ENCODE measurements at regions of chr1 and their contacts with region 1.

Region 1: GRCh38 chr1:40338745-40339424 is 21.8 kb upstream of the COL9A2 start:
- DNase-seq: peak; percentile 84
- CTCF ChIP-seq: peak; percentile 97

Region 2: GRCh38 chr1:40094466-40095110 is 244.3 kb before region 1 on chr1:
- CTCF ChIA-PET with region 1: interaction called, 262 read pairs
- POLR2A ChIA-PET with region 1: no interaction called
- DNase-seq: no peak
- CTCF ChIP-seq: no peak

Region 3: GRCh38 chr1:40153073-40153770 is 185.7 kb before region 1 on chr1:
- CTCF ChIA-PET with region 1: interaction called, 182 read pairs
- POLR2A ChIA-PET with region 1: no interaction called
- DNase-seq: peak; percentile 35
- CTCF ChIP-seq: peak; percentile 74

Region 4: DNA sequence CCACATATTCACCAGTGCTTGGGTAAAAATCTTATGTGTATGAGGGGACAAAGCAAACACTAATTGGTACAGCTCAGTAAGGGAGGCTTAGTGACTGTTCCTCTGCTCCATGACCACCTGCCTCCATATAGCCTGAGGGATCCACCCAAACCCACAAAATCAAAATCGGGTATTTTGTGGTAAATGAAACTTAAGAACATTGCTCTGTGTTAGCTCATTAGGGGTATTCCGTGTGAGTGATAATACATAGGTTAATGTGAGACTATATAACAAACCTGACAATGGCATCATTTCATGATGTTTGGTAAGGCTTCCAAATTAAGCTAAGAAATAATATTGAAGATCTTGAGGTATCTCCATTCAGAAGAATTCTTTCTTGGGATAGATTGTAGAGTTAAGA is 47.6 kb before region 1 on chr1:
- CTCF ChIA-PET with region 1: interaction called, 15 read pairs
- POLR2A ChIA-PET with region 1: no interaction called
- DNase-seq: no peak
- CTCF ChIP-seq: no peak

Region 5: DNA sequence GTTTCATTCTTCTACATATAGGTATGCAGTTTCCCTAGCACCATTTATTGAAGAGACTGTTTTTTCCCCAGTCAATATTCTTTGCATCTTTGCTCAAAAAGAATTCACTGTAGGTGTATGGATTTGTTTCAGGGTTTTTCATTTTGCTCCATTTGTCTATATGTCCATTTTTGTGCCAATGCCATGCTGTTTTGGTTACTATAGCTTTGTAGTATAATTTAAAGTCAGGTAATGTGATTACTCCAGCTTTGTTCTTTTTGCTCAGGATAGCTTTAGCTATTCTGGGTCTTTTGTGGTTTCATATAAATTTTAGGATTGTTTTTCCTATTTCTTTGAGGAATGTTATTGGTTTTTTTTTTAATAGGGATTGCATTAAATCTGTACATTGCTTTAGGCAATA is 18.7 kb after region 1 on chr1:
- CTCF ChIA-PET with region 1: interaction called, 31 read pairs
- POLR2A ChIA-PET with region 1: no interaction called
- DNase-seq: no peak
- CTCF ChIP-seq: no peak

Region 6: DNA sequence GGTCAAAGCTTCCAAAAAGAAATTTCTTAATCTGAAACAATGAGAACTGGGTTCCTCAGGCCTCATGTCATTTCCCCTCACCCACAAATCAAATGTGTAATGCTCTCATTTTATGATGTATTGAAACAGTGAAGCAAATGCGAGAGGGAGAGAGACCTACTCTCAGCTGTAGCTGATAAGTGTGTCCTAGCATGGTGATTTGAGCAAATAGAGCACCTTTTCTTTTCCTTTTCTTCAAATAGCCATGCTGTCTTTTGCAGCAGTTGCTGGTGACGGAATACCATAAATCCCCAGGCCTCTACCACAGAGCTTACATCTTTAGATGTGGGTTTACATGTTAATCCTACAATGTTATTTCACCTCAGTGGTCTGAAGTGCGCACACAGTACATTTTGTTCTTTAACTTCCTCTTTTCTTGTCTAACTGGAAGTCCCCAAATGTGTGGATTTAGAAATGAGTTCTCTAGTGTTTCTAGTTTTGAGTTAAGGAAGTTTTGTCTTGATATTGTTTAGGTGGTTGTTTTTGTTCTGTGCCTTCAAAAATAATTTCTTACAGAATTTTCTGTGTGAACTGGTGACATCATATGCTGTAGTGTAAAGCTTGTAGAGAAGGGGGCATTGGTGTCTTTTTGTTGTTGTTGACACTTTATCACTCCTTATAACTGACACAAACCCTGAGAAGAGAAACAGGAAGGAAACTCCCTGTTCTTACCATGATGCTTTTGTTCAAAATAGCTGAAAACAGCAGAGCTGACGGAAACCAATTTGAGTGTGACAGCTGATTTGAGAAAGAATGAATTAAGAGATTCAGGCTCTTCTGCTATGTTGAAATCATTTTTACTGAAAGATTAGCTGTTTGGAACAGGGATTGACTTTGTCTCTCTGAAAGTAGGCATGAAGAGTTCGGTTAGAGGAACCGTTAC is 46.8 kb after region 1 on chr1:
- CTCF ChIA-PET with region 1: interaction called, 12 read pairs
- POLR2A ChIA-PET with region 1: no interaction called
- DNase-seq: peak; percentile 52
- CTCF ChIP-seq: no peak